Panc1 (cell line): ENCODE measurements at regions of chr5 and their contacts with region 1.

Region 1: DNA sequence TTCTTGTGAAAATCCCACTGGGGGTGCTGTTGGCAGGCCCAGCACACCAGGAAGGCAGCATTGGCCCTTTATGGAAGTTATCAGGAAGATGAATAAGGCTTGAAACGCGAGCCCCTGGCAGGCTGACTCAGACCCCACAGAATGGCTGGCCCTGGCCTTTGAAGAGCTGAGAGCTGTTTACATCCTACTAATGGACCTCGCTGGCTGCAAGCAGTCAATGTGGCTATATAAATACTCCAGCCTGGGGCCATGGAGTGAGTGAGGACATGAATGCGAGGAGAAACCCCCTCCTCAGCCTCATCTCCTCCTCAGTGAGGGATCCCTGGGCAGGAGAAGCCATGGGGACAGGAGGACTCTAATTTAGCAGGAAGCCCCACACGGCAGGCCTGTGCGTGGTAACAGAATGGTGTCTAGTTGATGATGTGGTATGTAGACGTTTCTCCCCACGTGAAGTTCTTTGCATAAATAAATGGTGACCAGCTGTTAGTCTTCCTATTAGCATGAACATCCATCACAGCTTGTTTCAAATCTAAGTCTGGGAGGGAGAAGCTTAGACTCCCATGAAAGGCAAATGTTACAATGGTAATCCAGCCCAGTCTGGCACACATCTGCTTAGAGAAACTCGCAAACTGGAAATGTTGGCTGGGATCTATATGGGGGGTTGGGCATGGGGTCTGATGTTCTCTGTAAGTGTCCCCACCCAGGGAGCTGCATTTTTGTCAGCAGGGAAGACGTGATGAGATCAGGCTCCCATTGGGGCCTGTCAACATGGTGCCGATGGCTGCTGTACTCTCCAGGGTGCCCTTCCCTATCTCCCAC is 175.1 kb upstream of the PITX1 start:
- DNase-seq: peak; percentile 24
- ATAC-seq: peak; percentile 74
- H3K4me3 ChIP-seq: no peak overlapping the region
- H3K27ac ChIP-seq: no peak overlapping the region
- H3K4me1 ChIP-seq: no peaks in the 10 kb centered on the region; the same call in 1 of the 2 replicates
- H3K27me3 ChIP-seq: no peaks in the 10 kb centered on the region
- CTCF ChIP-seq: no peak

Region 2: GRCh38 chr5:134994560-134995156 is 214.5 kb before region 1 on chr5:
- CTCF ChIA-PET with region 1: no interaction called
- POLR2A ChIA-PET with region 1: no interaction called
- in situ Hi-C with region 1: no loop called
- intact Hi-C with region 1: no loop called
- DNase-seq: no peak
- ATAC-seq: no peak; the same call in 1 of the 2 replicates
- H3K4me3 ChIP-seq: no peak overlapping the region
- H3K27ac ChIP-seq: no peak overlapping the region
- H3K4me1 ChIP-seq: no peaks in the 10 kb centered on the region
- H3K27me3 ChIP-seq: no peaks in the 10 kb centered on the region
- CTCF ChIP-seq: no peak

Region 3: DNA sequence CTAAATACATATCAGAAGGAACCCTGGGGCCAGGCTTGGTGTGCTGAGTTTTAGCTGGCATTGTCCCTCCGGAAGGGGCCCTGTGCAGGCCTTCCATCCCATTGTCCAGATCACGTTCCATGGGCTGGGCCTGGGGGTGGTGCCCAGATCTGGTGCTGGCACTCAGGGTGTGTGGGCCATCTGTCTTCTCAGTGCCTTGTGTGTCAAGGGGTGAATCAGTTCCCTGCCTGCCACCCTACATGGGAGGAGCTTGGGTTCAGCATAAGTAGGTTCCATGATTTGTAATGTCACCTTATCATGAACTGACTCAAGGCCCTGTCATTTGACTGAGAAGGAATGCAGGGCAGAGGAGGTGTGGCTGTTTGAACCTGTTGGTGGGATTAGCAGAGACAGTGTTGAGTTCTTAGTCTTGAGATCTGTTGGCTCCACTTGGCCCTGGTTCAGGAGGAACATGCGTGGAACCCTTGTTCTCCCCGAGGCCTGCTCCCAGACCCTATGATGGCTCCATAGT is 13.1 kb after region 1 on chr5:
- CTCF ChIA-PET with region 1: no interaction called
- POLR2A ChIA-PET with region 1: no interaction called
- in situ Hi-C with region 1: no loop called
- intact Hi-C with region 1: no loop called
- DNase-seq: no peak
- ATAC-seq: no peak
- H3K4me3 ChIP-seq: no peak overlapping the region
- H3K27ac ChIP-seq: no peak overlapping the region
- H3K4me1 ChIP-seq: no peaks in the 10 kb centered on the region
- H3K27me3 ChIP-seq: no peaks in the 10 kb centered on the region
- CTCF ChIP-seq: no peak

Region 4: DNA sequence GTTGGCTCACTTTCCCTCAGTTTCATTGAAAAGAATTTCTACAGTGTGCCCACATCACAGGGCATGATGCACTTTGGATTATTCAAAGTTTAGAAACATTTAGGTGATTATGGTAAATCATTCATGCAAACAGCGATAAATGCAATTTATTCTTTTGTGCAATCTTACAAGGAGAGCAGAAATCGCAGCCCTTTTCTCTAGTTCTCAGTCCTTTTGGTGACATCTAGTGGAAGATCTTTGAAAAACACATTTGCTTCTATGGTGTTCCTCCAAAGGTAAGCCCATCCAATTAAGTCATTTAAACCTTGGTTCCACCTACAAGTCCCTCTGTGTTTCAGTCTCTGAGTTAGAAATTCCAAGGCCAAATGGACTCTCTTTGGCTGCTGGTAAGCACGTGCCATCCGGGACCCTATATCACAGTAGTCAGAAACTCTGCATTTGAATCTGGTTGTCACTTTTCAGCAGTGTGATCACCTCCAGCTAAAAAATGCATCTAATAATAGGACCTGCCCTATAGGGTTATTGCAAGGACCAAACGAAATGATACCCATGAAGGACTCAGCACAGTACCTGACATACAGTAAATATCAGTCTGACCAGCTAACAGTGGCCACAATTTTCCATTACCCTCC is 123.5 kb after region 1 on chr5:
- CTCF ChIA-PET with region 1: interaction called, 3 read pairs
- POLR2A ChIA-PET with region 1: no interaction called
- in situ Hi-C with region 1: no loop called
- intact Hi-C with region 1: loop called (anchors 5 kb)
- DNase-seq: peak; percentile 46
- ATAC-seq: peak; percentile 50; the same call in 1 of the 2 replicates
- H3K4me3 ChIP-seq: no peak overlapping the region
- H3K27ac ChIP-seq: no peak overlapping the region
- H3K4me1 ChIP-seq: no peaks in the 10 kb centered on the region
- H3K27me3 ChIP-seq: no peaks in the 10 kb centered on the region
- CTCF ChIP-seq: peak; percentile 76